Activated T-helper 1 cell treated with anti-CD3 and anti-CD28 coated beads, Interleukin-12 subunit alpha, Interleukin-12 subunit beta, Interleukin-2, Interleukin-4 antibody, amounts not matched to agents 30 ng/mL and 10 ng/mL and 1 ng/mL, durations not matched to agents 14 hours and 24 hours and 36 hours (primary cell): ENCODE measurements at regions of chr7 and their contacts with region 1.

Region 1: DNA sequence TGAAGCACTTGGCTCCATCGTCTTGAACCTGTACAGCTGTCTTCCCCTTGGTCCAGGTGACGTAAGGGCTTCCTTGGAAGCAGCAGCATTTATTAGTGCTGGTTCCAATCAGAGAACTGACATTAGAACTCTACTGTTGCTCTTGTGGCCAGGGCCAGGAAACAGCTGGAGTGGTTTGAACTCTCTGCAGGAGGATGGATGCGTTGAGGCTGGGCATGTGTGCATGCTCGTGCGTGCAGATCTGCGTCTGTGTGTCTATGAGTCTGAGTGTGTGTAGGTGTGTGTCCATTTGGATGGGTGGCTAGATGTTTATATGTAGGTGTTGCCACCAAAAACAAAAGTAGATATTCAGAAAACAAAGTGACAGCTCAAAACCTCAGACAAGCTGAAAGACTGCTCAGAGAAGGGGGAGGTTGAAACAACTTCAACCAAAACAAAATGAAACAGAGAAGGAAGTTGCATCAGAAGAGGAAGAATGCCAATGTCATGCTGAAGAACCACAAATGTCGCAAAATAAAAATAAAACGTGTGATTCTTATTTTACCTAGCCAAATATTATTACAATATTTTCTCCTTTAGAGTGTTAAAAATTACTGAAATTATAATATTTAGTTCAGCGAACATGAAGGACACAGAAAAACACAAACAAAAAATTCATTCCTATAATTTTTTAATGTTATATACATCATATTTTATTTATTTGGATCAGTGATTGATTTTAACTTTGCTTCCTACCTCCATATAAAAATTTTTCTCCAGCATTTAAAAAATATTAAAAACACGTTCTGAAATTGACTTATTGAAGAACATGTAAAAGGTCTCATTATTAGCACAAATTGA is 96.1 kb upstream of the MKLN1 start:
- DNase-seq: peak; percentile 65
- H3K4me3 Mint-ChIP-seq: peak overlapping the region; percentile 50
- H3K27ac Mint-ChIP-seq: peak overlapping the region; percentile 86
- H3K4me1 Mint-ChIP-seq: peaks cover 62% of the 10 kb centered on the region
- H3K27me3 Mint-ChIP-seq: no peaks in the 10 kb centered on the region

Region 2: GRCh38 chr7:130180571-130181262 is 1050.9 kb before region 1 on chr7:
- intact Hi-C with region 1: loop called (anchors 1 kb)
- DNase-seq: no peak
- H3K4me3 Mint-ChIP-seq: peak overlapping the region; percentile 15
- H3K27ac Mint-ChIP-seq: peak overlapping the region; percentile 92
- H3K4me1 Mint-ChIP-seq: peaks cover 36% of the 10 kb centered on the region
- H3K27me3 Mint-ChIP-seq: no peaks in the 10 kb centered on the region

Region 3: GRCh38 chr7:130277763-130278643 is 953.6 kb before region 1 on chr7:
- intact Hi-C with region 1: loop called (anchors 5 kb)
- DNase-seq: no peak
- H3K4me3 Mint-ChIP-seq: no peak overlapping the region
- H3K27ac Mint-ChIP-seq: peak overlapping the region; percentile 73
- H3K4me1 Mint-ChIP-seq: peaks cover 24% of the 10 kb centered on the region
- H3K27me3 Mint-ChIP-seq: peaks cover 2% of the 10 kb centered on the region

Region 4: GRCh38 chr7:131188367-131189339 is 42.9 kb before region 1 on chr7:
- intact Hi-C with region 1: loop called (anchors 1 kb)
- DNase-seq: peak; percentile 59
- H3K4me3 Mint-ChIP-seq: peak overlapping the region; percentile 52
- H3K27ac Mint-ChIP-seq: peak overlapping the region; percentile 91
- H3K4me1 Mint-ChIP-seq: peaks cover 59% of the 10 kb centered on the region
- H3K27me3 Mint-ChIP-seq: no peaks in the 10 kb centered on the region

Region 5: GRCh38 chr7:131210618-131211017 is 21.0 kb before region 1 on chr7:
- intact Hi-C with region 1: loop called (anchors 2 kb)
- DNase-seq: no peak
- H3K4me3 Mint-ChIP-seq: no peak overlapping the region
- H3K27ac Mint-ChIP-seq: no peak overlapping the region
- H3K4me1 Mint-ChIP-seq: no peaks in the 10 kb centered on the region
- H3K27me3 Mint-ChIP-seq: peaks cover 11% of the 10 kb centered on the region

Region 6: GRCh38 chr7:131370523-131370968 is 138.9 kb after region 1 on chr7:
- intact Hi-C with region 1: loop called (anchors 2 kb)
- DNase-seq: peak; percentile 45
- H3K4me3 Mint-ChIP-seq: no peak overlapping the region
- H3K27ac Mint-ChIP-seq: no peak overlapping the region
- H3K4me1 Mint-ChIP-seq: peaks cover 62% of the 10 kb centered on the region
- H3K27me3 Mint-ChIP-seq: peaks cover 5% of the 10 kb centered on the region

Region 7: GRCh38 chr7:131501422-131501821 is 269.8 kb after region 1 on chr7:
- intact Hi-C with region 1: loop called (anchors 5 kb)
- DNase-seq: peak; percentile 61
- H3K4me3 Mint-ChIP-seq: no peak overlapping the region
- H3K27ac Mint-ChIP-seq: peak overlapping the region; percentile 28
- H3K4me1 Mint-ChIP-seq: peaks cover 49% of the 10 kb centered on the region
- H3K27me3 Mint-ChIP-seq: no peaks in the 10 kb centered on the region